HAP-1 (cell line): ENCODE measurements at regions of chr9 and their contacts with region 1.

Region 1: GRCh38 chr9:91186518-91187108 is 175.1 kb downstream of the AUH start:
- DNase-seq: no peak
- H3K4me3 ChIP-seq: no peak overlapping the region
- H3K4me1 ChIP-seq: no peaks in the 10 kb centered on the region
- H3K27me3 ChIP-seq: no peaks in the 10 kb centered on the region

Region 2: GRCh38 chr9:91245431-91246313 is 59.1 kb after region 1 on chr9:
- in situ Hi-C with region 1: loop called (anchors 10 kb)
- DNase-seq: no peak
- H3K4me3 ChIP-seq: no peak overlapping the region
- H3K4me1 ChIP-seq: no peaks in the 10 kb centered on the region
- H3K27me3 ChIP-seq: no peaks in the 10 kb centered on the region

Region 3: DNA sequence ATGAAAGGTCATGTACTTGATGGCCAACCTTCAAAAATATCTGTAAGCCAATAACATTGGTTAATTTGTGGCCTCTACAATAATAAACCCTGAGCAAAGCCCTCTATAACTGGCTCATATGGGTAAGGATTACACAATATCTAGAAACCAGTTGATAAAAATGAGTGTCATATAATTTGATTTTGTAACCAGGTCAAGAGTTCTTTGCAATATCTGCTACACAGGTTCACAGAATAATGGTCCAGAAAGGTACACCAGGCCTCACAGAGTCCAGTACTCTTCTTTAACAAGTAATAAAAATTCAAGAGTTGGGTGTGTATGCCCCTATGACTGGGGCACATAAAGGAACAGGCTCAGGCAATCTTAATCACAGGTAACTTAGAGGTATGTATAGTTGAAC is 79.8 kb after region 1 on chr9:
- in situ Hi-C with region 1: no loop called
- DNase-seq: no peak
- H3K4me3 ChIP-seq: no peak overlapping the region
- H3K4me1 ChIP-seq: no peaks in the 10 kb centered on the region
- H3K27me3 ChIP-seq: no peaks in the 10 kb centered on the region